Activated CD4-positive, alpha-beta memory T cell treated with anti-CD3 and anti-CD28 coated beads for 36 hours (primary cell): ENCODE measurements at regions of chr13 and their contacts with region 1.

Region 1: DNA sequence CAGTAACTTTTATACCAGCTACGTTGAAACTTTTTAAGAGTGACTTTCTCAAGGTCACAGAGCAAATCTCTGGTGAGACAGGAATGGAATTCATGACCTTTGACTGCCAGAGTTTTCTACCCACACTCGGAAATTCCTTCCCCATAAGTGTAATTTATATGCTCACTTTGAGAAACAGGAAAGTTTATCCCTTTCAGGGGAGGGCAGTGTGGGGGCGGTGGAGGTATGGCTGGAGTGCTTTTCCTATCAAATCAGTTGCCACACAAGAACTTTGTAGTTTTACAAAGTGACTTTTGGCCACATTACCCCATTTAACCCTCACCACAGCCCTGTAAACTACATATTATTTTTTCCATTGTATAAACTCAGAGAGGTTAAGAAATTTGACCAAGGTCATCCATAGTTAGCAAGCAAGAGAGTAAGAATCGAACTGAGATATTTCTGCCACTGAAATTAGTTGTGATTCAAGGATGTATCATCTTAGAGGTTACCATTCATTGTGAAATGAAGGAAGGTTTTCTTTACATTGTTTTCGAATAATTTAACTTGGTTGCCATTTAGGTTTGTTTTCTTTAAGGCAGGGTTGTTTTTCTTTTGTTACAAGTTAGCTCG is 5.9 kb downstream of the KLF12 start:
- DNase-seq: peak; percentile 56
- H3K4me3 Mint-ChIP-seq: peak overlapping the region; percentile 60
- H3K27ac Mint-ChIP-seq: peak overlapping the region; percentile 87
- H3K4me1 Mint-ChIP-seq: peaks cover 72% of the 10 kb centered on the region
- H3K27me3 Mint-ChIP-seq: no peaks in the 10 kb centered on the region

Region 2: DNA sequence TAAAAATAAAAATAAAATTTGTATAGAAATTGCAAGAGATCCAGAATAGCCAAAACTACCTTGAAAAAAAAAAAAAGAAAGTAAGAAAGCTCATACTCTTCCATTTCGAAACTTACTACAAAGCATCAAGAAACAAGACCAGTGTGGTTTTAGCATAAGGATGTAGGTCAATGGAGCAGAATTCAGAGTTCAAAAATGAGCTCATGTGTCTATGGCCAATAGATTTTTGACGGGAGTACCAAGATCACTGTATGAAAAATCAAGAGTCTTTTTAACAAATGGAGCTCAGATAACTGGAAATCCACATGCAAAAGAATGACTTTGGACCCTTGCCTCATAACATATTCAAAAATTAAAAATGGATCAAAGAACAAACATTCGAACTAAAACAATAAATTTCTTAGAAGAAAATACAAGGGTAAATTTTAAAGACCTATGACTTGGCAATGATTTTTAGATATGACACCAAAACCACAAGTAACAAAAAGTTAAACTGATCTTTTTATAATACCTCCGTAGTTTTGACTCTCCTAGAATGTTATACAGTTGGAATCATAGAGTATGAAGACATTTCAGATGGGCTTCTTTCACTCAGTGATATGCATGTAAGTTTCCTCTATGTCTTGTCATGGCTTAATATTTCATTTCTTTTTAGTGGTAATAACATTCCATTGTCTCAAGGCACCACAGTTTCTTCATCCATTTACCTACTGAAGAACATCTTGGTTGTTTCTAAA is 37.2 kb before region 1 on chr13:
- CTCF ChIA-PET with region 1: no interaction called
- POLR2A ChIA-PET with region 1: interaction called, 3 read pairs
- intact Hi-C with region 1: loop called (anchors 1 kb)
- DNase-seq: no peak
- H3K4me3 Mint-ChIP-seq: peak overlapping the region; percentile 54
- H3K27ac Mint-ChIP-seq: peak overlapping the region; percentile 83
- H3K4me1 Mint-ChIP-seq: peaks cover 66% of the 10 kb centered on the region
- H3K27me3 Mint-ChIP-seq: no peaks in the 10 kb centered on the region